T-cell (primary cell): ENCODE measurements at regions of chr3 and their contacts with region 1.

Region 1: DNA sequence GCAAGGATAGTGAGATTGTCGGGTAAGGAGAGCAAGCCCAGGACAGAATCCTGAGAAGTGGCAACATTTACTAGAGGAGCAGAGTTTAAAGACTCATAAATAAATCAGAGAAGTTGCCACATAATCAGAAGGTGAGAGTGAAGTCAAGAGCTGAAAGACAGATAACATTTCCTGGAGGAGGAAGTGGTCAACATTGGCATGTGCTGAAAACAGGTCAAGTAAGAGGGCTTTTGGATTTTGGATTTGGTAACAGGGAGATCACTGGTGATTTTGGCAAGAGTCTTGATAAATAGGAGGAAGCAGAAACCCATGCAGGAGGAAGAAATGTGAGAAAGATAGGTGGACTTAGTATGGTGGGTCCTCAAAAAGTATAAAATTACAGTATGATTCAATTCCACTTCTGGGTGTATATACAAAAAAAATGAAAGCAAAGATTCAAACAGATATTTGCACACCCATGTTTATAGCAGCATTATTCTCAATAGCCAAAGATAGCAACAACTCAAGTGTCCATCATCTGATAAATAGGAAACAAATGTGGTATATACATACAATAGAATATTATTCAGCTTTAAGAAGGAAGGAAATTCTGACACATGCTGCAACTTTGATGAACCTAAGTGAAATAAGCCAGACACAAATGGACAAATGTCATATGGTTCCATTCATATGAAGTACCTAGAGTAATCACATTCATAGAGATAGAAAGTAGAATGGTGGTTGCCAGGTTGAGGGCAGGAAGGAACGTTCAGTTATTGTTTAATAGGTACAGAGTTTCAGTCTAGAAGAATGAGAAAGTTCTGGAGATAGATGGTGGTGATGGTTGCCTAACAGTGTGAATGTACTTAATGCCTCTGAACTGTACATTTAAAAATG is 27.3 kb upstream of the MBNL1 start:
- DNase-seq: peak in 1 of 35 experiments; percentile 51
- ATAC-seq: peak in 3 of 4 experiments; percentile 24 to 41 (median 29)
- H3K4me3 ChIP-seq: no peak overlapping the region
- H3K4me3 Mint-ChIP-seq: peak overlapping the region; percentile 61 to 97 (median 94)
- H3K27ac ChIP-seq: peak overlapping the region; percentile 83
- H3K27ac Mint-ChIP-seq: peak overlapping the region; percentile 95
- H3K4me1 ChIP-seq: peaks cover 13 to 52% of the 10 kb centered on the region in 2 experiments
- H3K4me1 Mint-ChIP-seq: peaks cover 64 to 66% (median 65%) of the 10 kb centered on the region in 3 donors
- H3K27me3 ChIP-seq: no peaks in the 10 kb centered on the region
- H3K27me3 Mint-ChIP-seq: no peaks in the 10 kb centered on the region

Region 2: DNA sequence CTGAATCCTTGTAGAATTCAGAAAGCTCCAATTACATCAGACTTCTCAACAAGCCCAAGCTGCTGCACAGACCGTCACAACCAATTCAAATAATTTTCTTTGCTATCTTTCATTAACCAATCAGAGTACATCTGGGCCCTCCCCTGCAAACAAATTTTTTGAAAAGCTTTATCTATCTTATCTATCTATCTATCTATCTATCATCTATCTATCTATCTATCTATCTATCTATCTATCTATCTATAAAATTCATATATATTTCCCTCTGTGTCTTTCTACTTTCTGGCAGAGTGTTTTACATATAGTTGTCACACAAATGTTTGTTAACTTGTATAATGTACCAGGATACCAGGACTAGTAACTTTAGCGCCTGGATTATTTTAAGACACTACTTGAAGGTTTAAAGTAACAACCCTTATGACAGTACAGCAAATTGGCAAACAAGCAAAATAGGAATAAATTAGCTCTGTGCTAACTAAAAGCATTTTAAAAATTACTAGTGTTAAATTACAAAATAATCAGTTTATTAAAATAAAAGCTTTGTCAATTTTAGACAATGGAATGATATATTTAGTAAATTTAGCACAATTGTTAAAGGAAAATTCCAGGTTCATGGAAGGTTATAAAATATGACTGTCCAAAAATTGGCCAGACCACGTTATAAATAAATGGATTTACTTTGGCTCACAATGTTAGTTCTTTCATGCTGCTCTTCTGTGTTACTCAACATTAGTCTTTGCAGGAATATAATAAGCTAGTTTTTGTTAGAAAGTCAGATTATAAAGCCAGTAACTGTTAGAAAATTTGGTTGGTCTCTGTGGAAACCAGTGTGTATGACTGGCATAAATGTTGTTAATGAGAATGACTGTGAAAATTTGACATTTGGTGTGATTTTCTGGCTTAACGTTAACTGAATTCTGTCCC is 229.3 kb before region 1 on chr3:
- CTCF ChIA-PET with region 1: no interaction called
- POLR2A ChIA-PET with region 1: no interaction called
- DNase-seq: no peak
- ATAC-seq: no peak
- H3K4me3 ChIP-seq: no peak overlapping the region
- H3K4me3 Mint-ChIP-seq: no peak overlapping the region
- H3K27ac ChIP-seq: no peak overlapping the region
- H3K27ac Mint-ChIP-seq: no peak overlapping the region
- H3K4me1 ChIP-seq: no peaks in the 10 kb centered on the region
- H3K4me1 Mint-ChIP-seq: no peaks in the 10 kb centered on the region
- H3K27me3 ChIP-seq: no peaks in the 10 kb centered on the region
- H3K27me3 Mint-ChIP-seq: no peaks in the 10 kb centered on the region

Region 3: DNA sequence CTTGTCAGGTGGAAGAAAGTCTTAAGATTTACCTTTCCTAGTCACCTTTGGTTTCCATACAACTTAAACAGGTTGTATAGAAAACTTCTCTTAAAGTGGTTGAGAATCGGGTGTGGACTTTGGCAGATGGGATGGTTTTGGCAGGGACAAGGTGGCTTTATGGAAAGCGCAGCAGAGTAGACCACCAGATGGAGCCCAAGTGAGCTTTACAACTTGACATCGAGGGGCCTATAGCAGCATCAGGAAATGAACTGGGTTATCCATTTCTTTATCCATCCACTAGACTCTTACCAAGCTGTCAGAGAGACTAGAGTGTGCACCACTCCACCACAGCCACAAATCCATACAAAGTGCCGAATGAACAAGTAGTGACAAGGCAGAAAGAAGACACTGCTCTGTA is 57.9 kb before region 1 on chr3:
- CTCF ChIA-PET with region 1: interaction called, 5 to 12 read pairs
- POLR2A ChIA-PET with region 1: interaction called in 1 of 2 experiments, 6 read pairs
- DNase-seq: peak in 34 of 35 experiments; percentile 3 to 79 (median 46)
- ATAC-seq: peak; percentile 76 to 87 (median 81)
- H3K4me3 ChIP-seq: no peak overlapping the region
- H3K4me3 Mint-ChIP-seq: peak overlapping the region in 2 of 3 donors; percentile 22 to 32
- H3K27ac ChIP-seq: peak overlapping the region; percentile 7
- H3K27ac Mint-ChIP-seq: peak overlapping the region; percentile 59 to 80
- H3K4me1 ChIP-seq: peaks cover 4% of the 10 kb centered on the region in 2 experiments
- H3K4me1 Mint-ChIP-seq: peaks cover 64 to 75% (median 69%) of the 10 kb centered on the region in 3 donors
- H3K27me3 ChIP-seq: no peaks in the 10 kb centered on the region
- H3K27me3 Mint-ChIP-seq: no peaks in the 10 kb centered on the region

Region 4: GRCh38 chr3:152258448-152259393 is 17.3 kb after region 1 on chr3:
- CTCF ChIA-PET with region 1: interaction called, 4 to 34 read pairs
- POLR2A ChIA-PET with region 1: interaction called, 12 to 40 read pairs
- DNase-seq: peak in 31 of 35 experiments; percentile 22 to 73 (median 50)
- ATAC-seq: peak; percentile 46 to 76 (median 53)
- H3K4me3 ChIP-seq: peak overlapping the region; percentile 16 to 29
- H3K4me3 Mint-ChIP-seq: peak overlapping the region; percentile 63 to 72 (median 64)
- H3K27ac ChIP-seq: peak overlapping the region; percentile 94
- H3K27ac Mint-ChIP-seq: peak overlapping the region; percentile 97
- H3K4me1 ChIP-seq: peaks cover 53 to 72% of the 10 kb centered on the region in 2 experiments
- H3K4me1 Mint-ChIP-seq: peaks cover 87 to 92% (median 90%) of the 10 kb centered on the region in 3 donors
- H3K27me3 ChIP-seq: no peaks in the 10 kb centered on the region
- H3K27me3 Mint-ChIP-seq: no peaks in the 10 kb centered on the region

Region 5: DNA sequence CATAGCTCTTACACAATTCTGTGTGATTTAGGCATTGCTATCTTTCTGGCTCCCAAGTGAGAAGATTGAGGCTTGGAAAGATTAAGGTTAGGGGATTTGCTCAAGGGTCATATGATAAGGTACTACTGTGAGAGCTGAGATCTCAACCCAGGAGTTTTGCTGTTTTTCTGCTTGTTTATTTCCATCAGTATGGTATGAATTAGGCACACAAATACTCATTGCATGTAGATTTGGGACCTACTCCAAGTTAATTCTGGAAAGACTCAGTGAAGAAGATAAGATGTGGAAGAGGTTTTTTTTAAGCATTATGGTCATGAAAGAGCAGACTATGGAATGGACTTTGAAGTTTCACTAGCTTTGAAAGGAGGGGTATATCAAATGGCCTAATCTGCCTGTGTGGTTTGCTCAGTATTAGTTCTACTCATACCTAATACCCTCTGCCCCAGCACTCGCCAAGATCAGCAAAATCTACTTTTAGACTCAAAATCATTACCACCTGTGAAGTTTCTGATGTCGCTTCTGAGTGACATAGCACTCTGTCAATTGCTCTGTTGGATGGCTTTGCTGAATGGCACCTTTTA is 39.8 kb after region 1 on chr3:
- CTCF ChIA-PET with region 1: interaction called in 1 of 2 experiments, 5 read pairs
- POLR2A ChIA-PET with region 1: interaction called, 4 to 12 read pairs
- DNase-seq: no peak
- ATAC-seq: peak in 1 of 4 experiments; percentile 4
- H3K4me3 ChIP-seq: peak overlapping the region; percentile 13 to 38
- H3K4me3 Mint-ChIP-seq: peak overlapping the region; percentile 52 to 69 (median 64)
- H3K27ac ChIP-seq: peak overlapping the region; percentile 65
- H3K27ac Mint-ChIP-seq: peak overlapping the region; percentile 73 to 78
- H3K4me1 ChIP-seq: peaks cover 14 to 83% of the 10 kb centered on the region in 2 experiments
- H3K4me1 Mint-ChIP-seq: peaks cover 82 to 93% (median 84%) of the 10 kb centered on the region in 3 donors
- H3K27me3 ChIP-seq: no peaks in the 10 kb centered on the region
- H3K27me3 Mint-ChIP-seq: no peaks in the 10 kb centered on the region

Region 6: DNA sequence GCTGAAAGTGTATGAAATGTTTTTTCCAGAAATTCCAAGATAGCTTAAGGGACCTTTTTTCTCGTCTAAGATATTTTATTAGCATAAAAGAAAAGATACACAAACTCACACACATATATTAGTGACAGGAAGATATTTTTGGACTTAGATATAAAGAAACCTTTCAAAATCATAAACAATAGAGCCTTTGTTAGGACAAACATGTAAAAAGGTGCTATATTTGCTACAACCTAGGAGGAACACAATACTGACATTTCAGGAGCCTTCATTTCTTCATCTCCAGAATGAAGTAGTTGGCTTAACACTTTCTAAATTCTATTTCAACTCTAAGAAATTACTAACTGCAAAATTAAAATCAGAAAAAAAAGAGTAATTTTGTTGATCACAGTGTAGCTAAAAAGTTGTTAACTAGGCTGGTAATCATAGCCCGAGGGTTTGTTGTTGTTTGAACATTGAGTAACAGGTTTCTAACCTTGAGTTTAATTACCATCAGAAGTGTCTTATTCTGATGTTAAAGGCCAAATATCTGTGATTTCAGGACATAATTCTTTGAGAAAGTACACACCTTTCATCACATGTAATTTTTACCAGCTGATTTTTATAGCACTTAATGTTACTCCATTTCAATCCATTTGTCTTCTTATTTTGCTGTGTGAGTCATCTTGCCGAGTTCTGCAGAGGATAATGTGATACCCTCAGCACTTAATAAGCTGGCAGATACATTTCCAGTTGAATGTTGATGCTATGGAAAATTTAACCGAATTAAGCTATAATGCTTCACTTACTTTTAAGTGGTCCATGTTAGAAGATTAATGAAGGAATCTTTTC is 124.6 kb after region 1 on chr3:
- CTCF ChIA-PET with region 1: no interaction called
- POLR2A ChIA-PET with region 1: interaction called in 1 of 2 experiments, 10 read pairs
- DNase-seq: no peak
- ATAC-seq: peak in 1 of 4 experiments; percentile 24
- H3K4me3 ChIP-seq: no peak overlapping the region
- H3K4me3 Mint-ChIP-seq: no peak overlapping the region
- H3K27ac ChIP-seq: no peak overlapping the region
- H3K27ac Mint-ChIP-seq: peak overlapping the region in 1 of 2 donors; percentile 73
- H3K4me1 ChIP-seq: peaks cover 4% of the 10 kb centered on the region in 2 experiments
- H3K4me1 Mint-ChIP-seq: peaks cover 78 to 83% (median 81%) of the 10 kb centered on the region in 3 donors
- H3K27me3 ChIP-seq: no peaks in the 10 kb centered on the region
- H3K27me3 Mint-ChIP-seq: no peaks in the 10 kb centered on the region

Region 7: DNA sequence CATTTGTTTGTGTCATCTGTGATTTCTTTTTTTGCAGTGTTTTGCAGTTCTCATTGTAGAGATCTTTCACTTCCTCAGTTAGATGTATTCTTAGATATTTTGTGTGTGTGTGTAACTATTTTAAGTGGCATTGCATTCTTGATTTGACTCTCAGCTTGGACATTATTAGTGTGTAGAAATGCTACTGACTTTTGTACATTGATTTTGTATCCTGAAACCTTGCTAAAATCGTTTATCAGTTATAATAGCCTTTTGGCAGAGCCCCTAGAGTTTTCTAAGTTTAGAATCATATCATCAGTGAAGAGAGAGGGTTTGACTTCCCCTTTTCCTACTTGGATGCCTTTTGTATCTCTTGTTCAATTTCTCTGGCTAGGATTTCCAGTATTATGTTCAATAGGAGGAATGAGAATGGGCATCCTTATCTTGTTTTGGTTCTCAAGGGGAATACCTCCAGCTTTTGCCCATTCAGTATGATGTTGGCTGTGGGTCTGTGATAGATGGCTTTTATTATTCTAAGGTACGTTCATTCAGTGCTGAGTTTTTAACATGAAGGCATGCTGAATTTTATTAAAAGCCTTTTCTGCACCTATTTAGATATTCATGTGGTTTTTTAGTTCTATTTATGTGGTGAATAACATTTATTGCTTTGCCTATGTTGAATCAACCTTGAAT is 239.0 kb after region 1 on chr3:
- CTCF ChIA-PET with region 1: no interaction called
- POLR2A ChIA-PET with region 1: no interaction called
- DNase-seq: no peak
- ATAC-seq: no peak
- H3K4me3 ChIP-seq: no peak overlapping the region
- H3K4me3 Mint-ChIP-seq: no peak overlapping the region
- H3K27ac ChIP-seq: no peak overlapping the region
- H3K27ac Mint-ChIP-seq: no peak overlapping the region
- H3K4me1 ChIP-seq: no peaks in the 10 kb centered on the region
- H3K4me1 Mint-ChIP-seq: no peaks in the 10 kb centered on the region
- H3K27me3 ChIP-seq: peaks cover 0 to 4% of the 10 kb centered on the region in 2 experiments
- H3K27me3 Mint-ChIP-seq: peaks cover 0 to 12% of the 10 kb centered on the region in 2 donors